Motor neuron (in vitro differentiated cells): ENCODE measurements at regions of chr5 and their contacts with region 1.

Region 1: DNA sequence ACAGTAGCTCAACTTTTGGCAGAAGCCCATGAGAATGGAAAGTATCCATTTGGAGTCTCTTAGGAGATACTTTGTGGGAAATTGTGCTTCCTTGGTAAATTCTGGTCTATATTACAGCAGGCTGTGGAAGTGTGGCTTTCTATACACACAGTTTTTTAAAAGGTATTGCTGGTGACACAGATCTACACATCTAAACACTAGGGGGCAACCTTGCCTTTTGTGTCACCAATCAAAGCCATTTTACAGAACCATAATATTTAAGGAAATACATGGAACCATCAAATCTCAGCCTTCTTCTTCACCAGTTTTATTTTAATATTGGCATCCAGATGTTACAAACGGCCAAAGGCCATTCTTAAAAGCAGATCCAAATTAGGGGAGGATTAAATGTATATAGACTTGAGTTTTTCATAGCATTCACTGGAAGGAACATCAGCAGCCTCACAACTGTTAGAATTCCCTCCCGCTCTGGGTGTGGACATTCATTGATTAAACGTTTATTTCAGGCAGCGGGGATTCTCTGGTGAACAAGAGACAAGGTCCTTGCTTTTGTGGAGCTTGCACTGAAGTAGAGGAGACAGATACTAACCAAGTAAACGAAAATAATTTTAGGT is 132.4 kb upstream of the EPB41L4A start:
- ATAC-seq: peak; percentile 1 to 80 (median 71)
- H3K4me3 ChIP-seq: no peak overlapping the region
- H3K27ac ChIP-seq: no peak overlapping the region
- H3K4me1 ChIP-seq: peaks cover 6 to 14% of the 10 kb centered on the region in 2 donors

Region 2: DNA sequence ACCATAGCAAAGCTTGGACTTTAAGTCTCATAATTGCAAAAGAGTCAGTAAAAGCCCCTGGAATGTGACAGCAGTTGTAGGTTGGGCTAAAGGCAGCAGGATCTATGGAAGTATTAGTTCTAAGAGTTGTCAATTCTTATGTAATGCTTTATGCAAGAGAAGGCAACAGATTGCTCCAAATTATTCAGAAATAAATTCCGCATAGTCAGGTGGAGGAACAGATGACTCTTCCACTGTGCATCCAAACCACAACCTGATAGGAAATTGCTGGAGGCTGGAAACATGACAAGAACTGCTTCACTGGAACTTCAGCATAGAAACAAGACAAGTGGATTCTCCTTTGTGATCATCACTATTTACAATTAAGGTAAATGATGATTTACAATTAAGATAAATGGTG is 1140.2 kb before region 1 on chr5:
- in situ Hi-C with region 1: no loop called
- ATAC-seq: peak in 2 of 8 experiments; percentile 25 to 33
- H3K4me3 ChIP-seq: no peak overlapping the region
- H3K27ac ChIP-seq: no peak overlapping the region
- H3K4me1 ChIP-seq: no peaks in the 10 kb centered on the region

Region 3: GRCh38 chr5:112136773-112137172 is 414.8 kb before region 1 on chr5:
- in situ Hi-C with region 1: no loop called
- ATAC-seq: no peak
- H3K4me3 ChIP-seq: no peak overlapping the region
- H3K27ac ChIP-seq: no peak overlapping the region
- H3K4me1 ChIP-seq: peaks cover 0 to 3% of the 10 kb centered on the region in 2 donors

Region 4: DNA sequence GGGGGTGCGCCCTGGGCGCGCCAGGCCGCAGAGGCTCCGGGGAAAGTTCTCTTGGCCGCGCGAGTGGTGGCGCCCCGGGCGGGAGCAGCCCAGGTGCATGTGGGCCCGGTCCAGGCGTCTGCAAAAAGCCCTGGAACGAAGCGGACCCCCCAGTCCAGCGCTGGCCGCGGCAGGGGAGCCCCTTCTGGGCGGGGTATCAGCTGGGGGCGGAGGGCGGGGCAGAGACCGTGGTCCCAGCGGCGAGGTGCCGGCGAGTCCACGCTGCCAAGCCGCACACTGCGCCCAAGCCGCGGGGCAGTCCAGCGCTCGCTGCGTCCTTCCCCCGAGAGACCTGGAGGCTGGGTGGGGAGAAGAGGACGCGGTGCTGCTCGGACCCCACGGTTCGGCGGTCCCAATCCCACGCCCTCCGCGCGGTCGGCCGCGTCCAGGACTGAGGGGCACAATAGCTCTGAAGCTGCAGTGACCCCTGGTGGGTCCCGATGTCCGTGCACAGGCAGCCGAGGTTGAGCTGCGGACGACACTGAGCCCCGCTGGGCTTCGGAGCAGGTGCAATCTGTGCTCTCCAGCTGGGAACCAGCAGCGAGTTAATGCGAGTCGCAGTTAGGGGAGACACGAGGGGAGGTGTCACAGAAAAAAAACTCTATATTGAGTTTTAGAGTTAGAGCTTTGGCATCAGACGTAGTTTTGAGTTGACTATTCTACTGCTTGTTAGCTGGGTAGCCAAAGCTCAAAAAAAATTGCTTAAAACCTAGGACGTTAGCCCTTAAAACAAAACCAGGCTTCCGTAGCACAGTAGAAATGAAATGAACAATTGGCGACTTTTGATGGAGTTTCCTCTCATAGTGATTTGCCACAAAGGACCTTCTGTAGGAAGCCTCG is 131.3 kb before region 1 on chr5:
- in situ Hi-C with region 1: no loop called
- ATAC-seq: peak; percentile 80 to 95 (median 91)
- H3K4me3 ChIP-seq: peak overlapping the region; percentile 62 to 95 (median 82)
- H3K27ac ChIP-seq: peak overlapping the region in 1 of 2 donors; percentile 42
- H3K4me1 ChIP-seq: peaks cover 3 to 19% of the 10 kb centered on the region in 2 donors

Region 5: GRCh38 chr5:112684737-112685136 is 133.2 kb after region 1 on chr5:
- in situ Hi-C with region 1: loop called in 1 of 9 experiments (anchors 10 kb)
- ATAC-seq: peak in 6 of 8 experiments; percentile 7 to 87 (median 78)
- H3K4me3 ChIP-seq: no peak overlapping the region
- H3K27ac ChIP-seq: no peak overlapping the region
- H3K4me1 ChIP-seq: peaks cover 0 to 4% of the 10 kb centered on the region in 2 donors

Region 6: GRCh38 chr5:112737463-112738190 is 186.1 kb after region 1 on chr5 and contains the start of gene APC:
- in situ Hi-C with region 1: loop called in 3 of 9 experiments (anchors 25 kb)
- ATAC-seq: peak; percentile 97 to 99 (median 98)
- H3K4me3 ChIP-seq: peak within 1 kb of the TSS; percentile 44 to 76 (median 64)
- H3K27ac ChIP-seq: peak within 1 kb of the TSS; percentile 60 to 75
- H3K4me1 ChIP-seq: peaks cover 0 to 14% of the 10 kb centered on the region in 2 donors
- total RNA-seq, gene APC: 28.6 to 113 (median 53.9) TPM

Region 7: DNA sequence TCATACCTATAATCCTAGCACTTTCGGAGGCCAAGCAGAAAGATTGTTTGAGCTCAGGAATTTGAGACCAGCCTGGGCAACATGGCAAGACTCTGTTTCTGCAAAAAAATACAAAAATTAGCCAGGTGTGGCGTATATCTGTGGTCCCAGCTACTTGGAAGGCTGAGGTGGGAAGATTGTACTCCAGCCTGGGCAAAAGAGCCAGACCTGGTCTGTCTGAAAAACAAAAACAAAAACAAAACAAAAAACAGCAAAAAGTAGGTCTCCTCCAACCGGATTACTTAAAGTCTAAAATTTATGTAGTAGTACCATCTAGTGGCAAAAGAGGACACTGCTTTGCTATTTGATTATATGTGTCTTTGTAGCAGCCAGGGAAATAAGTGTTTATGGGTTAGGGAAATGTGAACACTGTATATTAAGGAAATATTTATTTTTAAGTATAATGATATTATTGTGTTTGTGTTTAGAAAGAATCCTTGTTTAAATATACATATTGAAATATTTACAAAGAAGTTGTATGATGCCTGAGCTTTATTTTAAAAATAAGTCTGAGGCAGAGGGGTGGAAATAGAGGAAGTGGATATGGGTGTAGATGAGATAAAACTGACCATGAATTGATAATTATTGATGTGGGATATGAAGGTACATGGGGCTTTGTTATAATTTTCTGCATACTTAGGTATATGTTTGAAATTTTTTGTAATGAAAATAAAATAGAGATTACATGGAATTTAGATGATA is 206.1 kb after region 1 on chr5:
- in situ Hi-C with region 1: loop called in 4 of 9 experiments (anchors 5 to 25 kb)
- ATAC-seq: peak in 6 of 8 experiments; percentile 43 to 82 (median 70)
- H3K4me3 ChIP-seq: no peak overlapping the region
- H3K27ac ChIP-seq: no peak overlapping the region
- H3K4me1 ChIP-seq: no peaks in the 10 kb centered on the region

Region 8: DNA sequence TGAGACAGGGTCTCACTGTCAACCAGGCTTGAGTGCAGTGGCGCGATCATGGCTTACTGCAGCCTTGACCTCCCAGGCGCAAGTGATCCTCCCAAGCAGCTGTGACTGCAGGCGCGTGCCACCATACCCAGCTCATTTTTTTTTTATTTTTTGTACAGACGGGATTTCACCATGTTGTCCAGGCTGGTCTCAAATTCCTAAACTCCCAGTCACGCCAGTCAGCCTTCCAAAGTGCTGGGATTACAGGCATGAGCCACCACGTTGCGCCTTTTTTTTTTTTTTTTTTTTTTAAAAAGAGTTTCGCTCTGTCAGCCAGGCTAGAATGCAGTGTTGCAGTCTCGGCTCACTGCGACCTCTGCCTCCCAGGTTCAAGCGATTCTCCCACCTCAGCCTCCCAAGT is 282.4 kb after region 1 on chr5:
- in situ Hi-C with region 1: no loop called
- ATAC-seq: no peak
- H3K4me3 ChIP-seq: no peak overlapping the region
- H3K27ac ChIP-seq: no peak overlapping the region
- H3K4me1 ChIP-seq: no peaks in the 10 kb centered on the region